Activated CD8-positive, alpha-beta T cell treated with anti-CD3 and anti-CD28 coated beads for 36 hours (primary cell): ENCODE measurements at regions of chr15 and their contacts with region 1.

Region 1: GRCh38 chr15:40582726-40583246 is 11.3 kb upstream of the KNL1 start:
- DNase-seq: no peak
- ATAC-seq: peak; percentile 42
- H3K4me3 Mint-ChIP-seq: no peak overlapping the region
- H3K27ac Mint-ChIP-seq: no peak overlapping the region
- H3K4me1 Mint-ChIP-seq: no peaks in the 10 kb centered on the region
- H3K27me3 Mint-ChIP-seq: no peaks in the 10 kb centered on the region
- CTCF ChIP-seq: no peak

Region 2: DNA sequence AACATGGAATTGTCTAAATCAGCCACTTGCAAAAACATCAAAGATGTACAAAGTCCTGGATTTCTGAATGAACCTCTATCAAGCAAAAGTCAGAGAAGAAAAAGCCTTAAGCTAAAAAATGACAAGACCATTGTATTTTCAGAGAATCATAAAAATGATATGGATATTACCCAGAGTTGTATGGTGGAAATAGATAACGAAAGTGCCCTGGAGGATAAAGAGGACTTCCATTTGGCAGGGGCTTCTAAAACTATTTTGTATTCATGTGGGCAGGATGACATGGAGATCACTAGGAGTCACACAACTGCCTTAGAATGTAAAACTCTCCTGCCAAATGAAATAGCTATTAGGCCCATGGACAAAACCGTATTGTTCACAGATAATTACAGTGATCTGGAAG is 40.6 kb after region 1 on chr15:
- CTCF ChIA-PET with region 1: interaction called, 3 read pairs
- POLR2A ChIA-PET with region 1: no interaction called
- intact Hi-C with region 1: loop called (anchors 10 kb)
- DNase-seq: no peak
- ATAC-seq: no peak
- H3K4me3 Mint-ChIP-seq: no peak overlapping the region
- H3K27ac Mint-ChIP-seq: no peak overlapping the region
- H3K4me1 Mint-ChIP-seq: no peaks in the 10 kb centered on the region
- H3K27me3 Mint-ChIP-seq: no peaks in the 10 kb centered on the region
- CTCF ChIP-seq: no peak